A673 (cell line): ENCODE measurements at regions of chr4 and their contacts with region 1.

Region 1: DNA sequence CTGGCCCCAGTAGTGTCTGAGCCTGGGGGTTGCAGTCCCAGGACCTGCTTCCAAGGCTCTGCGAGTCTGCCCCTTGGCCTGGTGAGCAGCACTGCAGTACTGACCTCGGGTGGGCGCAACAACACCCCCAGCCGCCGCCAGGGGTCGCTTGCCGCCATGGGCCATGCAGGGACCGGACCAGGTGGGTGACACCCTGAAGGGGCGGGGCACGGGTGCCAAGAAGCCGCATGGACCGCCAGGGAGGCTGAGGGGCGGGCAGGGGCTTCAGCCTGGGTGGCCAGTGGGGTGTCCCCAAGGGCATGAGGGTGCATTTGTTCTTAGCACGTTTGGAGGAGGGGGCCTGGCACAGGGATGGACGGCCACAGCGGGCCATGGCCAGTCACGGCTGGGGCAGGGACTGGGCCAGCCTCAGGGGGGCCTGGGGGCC is 25.0 kb downstream of the TACC3 start:
- DNase-seq: peak; percentile 83
- H3K4me3 ChIP-seq: no peak overlapping the region
- H3K27ac ChIP-seq: no peak overlapping the region
- H3K4me1 ChIP-seq: no peaks in the 10 kb centered on the region
- H3K27me3 ChIP-seq: no peaks in the 10 kb centered on the region
- CTCF ChIP-seq: peak; percentile 92

Region 2: GRCh38 chr4:1809754-1810511 is 63.7 kb after region 1 on chr4:
- CTCF ChIA-PET with region 1: interaction called, 8 read pairs
- POLR2A ChIA-PET with region 1: interaction called, 24 read pairs
- intact Hi-C with region 1: loop called (anchors 1 kb)
- DNase-seq: peak; percentile 81
- H3K4me3 ChIP-seq: no peak overlapping the region
- H3K27ac ChIP-seq: no peak overlapping the region
- H3K4me1 ChIP-seq: no peaks in the 10 kb centered on the region
- H3K27me3 ChIP-seq: no peaks in the 10 kb centered on the region
- CTCF ChIP-seq: peak; percentile 95

Region 3: DNA sequence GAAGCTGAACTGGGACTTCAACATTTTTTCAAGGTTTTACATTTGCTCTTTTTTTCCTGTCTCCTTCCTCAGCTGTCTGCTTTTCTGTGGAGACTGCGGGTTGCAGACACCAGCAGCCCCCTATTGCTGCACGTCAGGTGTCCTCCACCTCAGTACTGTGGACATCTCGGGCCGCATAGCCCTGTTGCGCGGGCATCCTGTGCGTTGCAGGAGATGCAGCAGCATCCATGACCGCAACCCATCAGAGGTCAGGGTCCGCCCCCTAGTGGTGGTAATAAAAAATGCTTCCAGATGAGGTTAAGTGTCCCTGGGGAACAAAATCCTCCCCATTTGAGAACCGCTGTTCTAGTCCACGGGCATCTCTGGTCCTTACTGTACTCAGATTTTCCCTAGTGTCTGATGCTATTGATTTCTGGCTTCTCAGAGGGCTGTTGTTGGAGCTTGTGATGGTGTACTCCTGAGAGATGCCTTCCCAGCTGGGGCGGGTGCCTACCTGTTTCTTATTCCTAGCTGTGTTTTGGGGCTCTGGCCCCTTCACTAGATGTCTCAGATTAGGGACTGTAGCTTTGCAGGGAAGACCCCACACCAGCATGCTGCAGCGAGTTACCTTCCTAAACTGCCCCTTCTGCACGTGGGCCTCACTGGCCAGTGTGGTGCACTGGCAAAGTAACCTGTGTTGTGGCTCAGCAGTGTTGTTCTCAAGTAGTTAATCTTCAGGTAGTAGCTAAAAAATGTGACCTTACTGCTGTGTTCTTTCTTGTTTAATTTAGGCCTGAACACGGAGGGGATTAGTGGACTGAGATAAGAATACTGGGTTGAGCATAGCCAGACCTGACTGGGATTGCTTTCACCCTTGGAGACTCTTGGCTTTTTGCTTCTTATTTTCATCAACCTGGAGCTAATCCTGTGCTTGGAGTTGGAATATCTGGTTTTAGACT is 153.1 kb after region 1 on chr4:
- CTCF ChIA-PET with region 1: interaction called, 3 read pairs
- POLR2A ChIA-PET with region 1: no interaction called
- intact Hi-C with region 1: loop called (anchors 5 kb)
- DNase-seq: peak; percentile 81
- H3K4me3 ChIP-seq: no peak overlapping the region
- H3K27ac ChIP-seq: no peak overlapping the region
- H3K4me1 ChIP-seq: no peaks in the 10 kb centered on the region
- H3K27me3 ChIP-seq: no peaks in the 10 kb centered on the region
- CTCF ChIP-seq: peak; percentile 85

Region 4: DNA sequence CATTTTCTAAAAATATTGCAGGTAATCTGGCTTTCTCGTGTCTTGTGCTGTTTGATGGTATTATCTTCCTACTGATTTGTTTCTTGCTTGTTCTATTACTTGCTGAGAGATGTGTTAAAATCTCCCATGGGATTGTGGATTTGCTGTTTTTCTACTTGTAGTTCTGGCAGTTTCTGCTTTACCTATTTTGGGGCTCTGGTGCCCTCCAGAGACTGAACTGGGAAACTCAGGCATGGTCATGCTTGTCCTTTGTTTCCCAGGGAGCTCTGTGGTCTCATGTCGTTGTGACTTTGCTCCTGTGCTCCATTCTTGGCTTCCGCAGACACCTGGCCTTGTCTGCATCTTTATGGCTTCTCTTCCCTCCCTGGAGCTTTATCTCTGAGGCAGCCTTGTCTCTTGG is 164.4 kb after region 1 on chr4:
- CTCF ChIA-PET with region 1: interaction called, 4 read pairs
- POLR2A ChIA-PET with region 1: no interaction called
- intact Hi-C with region 1: loop called (anchors 5 kb)
- DNase-seq: peak; percentile 80
- H3K4me3 ChIP-seq: no peak overlapping the region
- H3K27ac ChIP-seq: peak overlapping the region; percentile 53
- H3K4me1 ChIP-seq: peaks cover 16% of the 10 kb centered on the region
- H3K27me3 ChIP-seq: no peaks in the 10 kb centered on the region
- CTCF ChIP-seq: peak; percentile 72

Region 5: DNA sequence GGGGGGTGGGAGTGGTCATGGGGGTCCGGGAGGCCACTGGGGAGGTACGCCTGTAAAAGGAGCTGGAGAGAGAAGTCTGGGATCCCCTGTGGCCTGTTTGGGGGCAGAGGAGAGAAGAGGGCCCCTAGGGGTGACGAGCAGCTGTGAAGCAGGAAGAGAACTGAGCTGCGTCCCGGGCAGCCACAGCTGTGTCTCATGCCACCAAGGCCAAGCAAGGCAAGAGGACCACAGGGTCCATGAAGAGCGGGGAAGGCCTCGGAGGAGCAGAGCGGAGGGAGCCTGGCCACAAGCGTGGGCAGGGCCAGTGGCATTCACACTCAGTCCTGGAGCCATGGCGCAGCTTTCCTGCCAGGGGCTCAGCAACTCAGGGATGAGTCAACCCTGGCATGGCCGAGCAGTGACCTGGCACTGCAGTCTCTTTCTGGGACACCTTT is 299.3 kb after region 1 on chr4:
- CTCF ChIA-PET with region 1: no interaction called
- POLR2A ChIA-PET with region 1: no interaction called
- intact Hi-C with region 1: no loop called
- DNase-seq: no peak
- H3K4me3 ChIP-seq: no peak overlapping the region
- H3K27ac ChIP-seq: no peak overlapping the region
- H3K4me1 ChIP-seq: peaks cover 6% of the 10 kb centered on the region
- H3K27me3 ChIP-seq: peaks cover 12% of the 10 kb centered on the region
- CTCF ChIP-seq: no peak

Region 6: GRCh38 chr4:2186133-2186864 is 440.0 kb after region 1 on chr4:
- CTCF ChIA-PET with region 1: no interaction called
- POLR2A ChIA-PET with region 1: no interaction called
- intact Hi-C with region 1: loop called (anchors 5 kb)
- DNase-seq: peak; percentile 24
- H3K4me3 ChIP-seq: no peak overlapping the region
- H3K27ac ChIP-seq: no peak overlapping the region
- H3K4me1 ChIP-seq: no peaks in the 10 kb centered on the region
- H3K27me3 ChIP-seq: no peaks in the 10 kb centered on the region
- CTCF ChIP-seq: peak; percentile 53